ENCODE measurements at regions of chr2 and their contacts with region 1.

Region 1: DNA sequence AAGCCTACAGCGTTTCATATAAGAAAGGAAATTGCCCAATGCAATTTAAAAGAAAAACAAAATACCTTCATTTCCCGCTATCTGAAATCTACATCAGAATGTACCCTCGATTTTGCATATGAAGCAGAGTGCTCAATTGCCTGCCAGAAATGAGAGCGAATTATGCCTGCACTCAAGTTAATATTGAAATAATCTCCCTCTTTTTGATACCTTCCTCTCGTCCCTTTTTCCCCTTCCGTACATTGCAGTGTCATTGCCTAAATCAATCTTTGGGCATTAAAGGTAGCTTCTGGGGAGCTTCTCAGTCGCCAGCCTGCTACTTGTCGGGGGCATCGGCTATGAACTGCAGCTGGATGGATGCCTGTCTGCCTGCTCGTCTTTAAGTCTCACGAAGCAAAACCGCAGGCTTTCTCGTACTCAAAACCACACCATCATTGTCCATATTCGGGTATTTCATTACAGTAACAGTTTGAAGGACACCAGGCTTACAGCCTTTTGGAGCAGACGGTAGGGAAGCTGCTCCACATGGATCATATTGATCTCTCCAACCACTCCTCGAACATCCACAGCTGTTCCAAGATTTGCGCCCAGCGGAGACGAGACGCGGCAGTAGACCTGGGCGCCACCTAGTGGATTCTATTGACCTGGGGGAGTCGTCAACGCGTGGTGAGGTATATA is 64.0 kb upstream of the HNRNPA3 start:
- DNase-seq: peak; percentile 75 to 83
- H3K4me3 ChIP-seq: no peak overlapping the region
- H3K4me3 Mint-ChIP-seq: peak overlapping the region; percentile 45
- H3K27ac Mint-ChIP-seq: no peak overlapping the region
- H3K4me1 ChIP-seq: no peaks in the 10 kb centered on the region
- H3K4me1 Mint-ChIP-seq: no peaks in the 10 kb centered on the region
- H3K27me3 ChIP-seq: no peaks in the 10 kb centered on the region
- H3K27me3 Mint-ChIP-seq: peaks cover 30% of the 10 kb centered on the region
- CTCF ChIP-seq: peak; percentile 80 to 95

Region 2: DNA sequence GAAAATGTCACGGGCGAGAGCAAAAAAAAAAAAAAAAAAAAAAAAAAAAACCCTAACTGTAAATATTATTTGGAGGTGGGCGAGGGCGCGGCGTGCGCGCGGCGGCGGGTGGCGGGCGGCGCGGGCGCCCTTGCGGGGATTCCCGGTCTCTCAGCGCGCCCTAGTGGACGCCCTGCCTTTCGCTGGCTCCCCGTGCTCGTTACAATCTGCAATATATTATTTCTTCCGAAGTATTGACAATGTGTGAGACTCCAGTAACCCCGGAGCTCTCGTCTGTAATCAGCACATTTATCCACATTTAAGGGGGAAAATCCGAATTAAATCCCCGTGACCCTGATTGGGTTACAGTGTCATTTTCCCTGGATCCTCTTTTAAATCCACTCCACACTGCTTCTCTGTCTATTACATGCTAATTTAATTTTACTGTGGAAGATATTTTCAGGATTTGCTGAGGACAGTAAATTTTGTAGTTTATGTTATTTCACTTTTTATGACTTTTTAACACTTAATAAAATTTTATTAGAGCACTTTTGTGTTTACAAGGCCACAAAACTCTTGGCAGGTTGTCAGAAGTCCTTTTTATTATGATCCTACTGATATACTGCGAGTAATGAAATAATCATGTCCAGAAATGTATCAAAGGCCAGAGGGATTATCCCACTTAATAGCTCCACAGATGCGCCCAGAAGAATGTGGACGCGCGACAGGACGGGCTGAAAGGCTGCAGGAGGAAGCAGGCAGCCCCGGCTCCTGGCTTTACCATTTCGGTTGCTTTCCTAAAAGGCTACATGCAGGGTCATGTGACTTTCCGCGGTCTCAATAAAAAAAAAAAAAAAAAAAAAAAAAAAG is 510.2 kb before region 1 on chr2:
- CTCF ChIA-PET with region 1: no interaction called
- POLR2A ChIA-PET with region 1: no interaction called
- intact Hi-C with region 1: loop called (anchors 10 kb)
- DNase-seq: peak; percentile 48 to 69
- H3K4me3 ChIP-seq: peak overlapping the region; percentile 31
- H3K4me3 Mint-ChIP-seq: peak overlapping the region; percentile 55
- H3K27ac Mint-ChIP-seq: no peak overlapping the region
- H3K4me1 ChIP-seq: no peaks in the 10 kb centered on the region
- H3K4me1 Mint-ChIP-seq: no peaks in the 10 kb centered on the region
- H3K27me3 ChIP-seq: no peaks in the 10 kb centered on the region; the same call in 1 of the 2 replicates
- H3K27me3 Mint-ChIP-seq: peaks cover 21% of the 10 kb centered on the region
- CTCF ChIP-seq: peak; percentile 72 to 82

Region 3: GRCh38 chr2:176978921-176979320 is 169.7 kb before region 1 on chr2:
- CTCF ChIA-PET with region 1: interaction called, 14 read pairs
- POLR2A ChIA-PET with region 1: no interaction called
- intact Hi-C with region 1: loop called (anchors 1 kb)
- DNase-seq: peak in 1 of 2 experiments; percentile 12
- H3K4me3 ChIP-seq: no peak overlapping the region
- H3K4me3 Mint-ChIP-seq: no peak overlapping the region
- H3K27ac Mint-ChIP-seq: no peak overlapping the region
- H3K4me1 ChIP-seq: no peaks in the 10 kb centered on the region
- H3K4me1 Mint-ChIP-seq: no peaks in the 10 kb centered on the region
- H3K27me3 ChIP-seq: no peaks in the 10 kb centered on the region
- H3K27me3 Mint-ChIP-seq: peaks cover 13% of the 10 kb centered on the region
- CTCF ChIP-seq: peak; percentile 16 to 24

Region 4: DNA sequence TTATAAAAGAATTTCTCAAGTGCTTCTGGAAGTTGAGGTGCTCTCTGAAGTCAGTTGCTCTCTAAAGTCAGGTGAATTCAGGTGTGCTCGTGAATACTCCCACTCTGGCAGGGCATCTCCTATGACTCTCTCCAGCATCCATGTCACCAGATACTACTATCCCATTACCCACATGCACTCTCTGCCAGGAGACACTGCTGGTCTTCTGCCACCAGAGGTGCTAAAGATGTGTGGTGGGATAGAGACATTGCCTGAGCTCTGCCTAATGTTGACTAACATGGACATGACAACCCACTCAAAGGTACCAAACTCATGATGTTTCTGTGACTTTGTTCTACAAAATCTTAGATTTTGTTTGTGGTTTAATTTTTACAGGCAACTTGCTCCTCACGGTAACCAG is 42.4 kb before region 1 on chr2:
- CTCF ChIA-PET with region 1: no interaction called
- POLR2A ChIA-PET with region 1: no interaction called
- intact Hi-C with region 1: loop called (anchors 1 kb)
- DNase-seq: peak in 1 of 2 experiments; percentile 19
- H3K4me3 ChIP-seq: no peak overlapping the region
- H3K4me3 Mint-ChIP-seq: no peak overlapping the region
- H3K27ac Mint-ChIP-seq: no peak overlapping the region
- H3K4me1 ChIP-seq: no peaks in the 10 kb centered on the region
- H3K4me1 Mint-ChIP-seq: no peaks in the 10 kb centered on the region
- H3K27me3 ChIP-seq: no peaks in the 10 kb centered on the region
- H3K27me3 Mint-ChIP-seq: peaks cover 10% of the 10 kb centered on the region
- CTCF ChIP-seq: peak; percentile 31 to 60

Region 5: GRCh38 chr2:177183860-177184259 is 35.2 kb after region 1 on chr2:
- CTCF ChIA-PET with region 1: no interaction called
- POLR2A ChIA-PET with region 1: no interaction called
- intact Hi-C with region 1: no loop called
- DNase-seq: no peak
- H3K4me3 ChIP-seq: no peak overlapping the region
- H3K4me3 Mint-ChIP-seq: no peak overlapping the region
- H3K27ac Mint-ChIP-seq: no peak overlapping the region
- H3K4me1 ChIP-seq: peaks cover 28% of the 10 kb centered on the region
- H3K4me1 Mint-ChIP-seq: peaks cover 26% of the 10 kb centered on the region
- H3K27me3 ChIP-seq: no peaks in the 10 kb centered on the region
- H3K27me3 Mint-ChIP-seq: no peaks in the 10 kb centered on the region
- CTCF ChIP-seq: no peak

Region 6: GRCh38 chr2:177758591-177759371 is 610.2 kb after region 1 on chr2:
- CTCF ChIA-PET with region 1: no interaction called
- POLR2A ChIA-PET with region 1: no interaction called
- intact Hi-C with region 1: loop called (anchors 5 kb)
- DNase-seq: peak in 1 of 2 experiments; percentile 60
- H3K4me3 ChIP-seq: no peak overlapping the region
- H3K4me3 Mint-ChIP-seq: no peak overlapping the region
- H3K27ac Mint-ChIP-seq: no peak overlapping the region
- H3K4me1 ChIP-seq: peaks cover 12% of the 10 kb centered on the region
- H3K4me1 Mint-ChIP-seq: peaks cover 9% of the 10 kb centered on the region
- H3K27me3 ChIP-seq: no peaks in the 10 kb centered on the region; the same call in 1 of the 2 replicates
- H3K27me3 Mint-ChIP-seq: peaks cover 12% of the 10 kb centered on the region
- CTCF ChIP-seq: peak; percentile 54 to 65

Measured in Caco-2 (cell line).